ENCODE measurements at regions of chr4 and their contacts with region 1.

Region 1: GRCh38 chr4:151569650-151570049 is 160.7 kb downstream of the FHIP1A start:
- DNase-seq: no peak
- ATAC-seq: no peak

Region 2: GRCh38 chr4:151583157-151583914 is 13.7 kb after region 1 on chr4:
- intact Hi-C with region 1: loop called (anchors 1 kb)
- DNase-seq: no peak
- ATAC-seq: no peak